Prostate gland (tissue), 2 donors: ENCODE measurements at regions of chr18 and their contacts with region 1.

Region 1: GRCh38 chr18:59697236-59697932 is at the start of gene CCBE1:
- DNase-seq: peak; percentile 43
- H3K4me3 ChIP-seq: peak within 1 kb of the TSS; percentile 34 to 36
- H3K27ac ChIP-seq: peak within 1 kb of the TSS; percentile 29 to 58
- H3K4me1 ChIP-seq: peaks cover 6% of the 10 kb centered on the region
- H3K27me3 ChIP-seq: no peaks in the 10 kb centered on the region
- CTCF ChIP-seq: peak; percentile 55 to 74 (median 64)
- POLR2A ChIP-seq: no peak
- total RNA-seq, gene CCBE1: 1.8 to 2.0 TPM

Region 2: GRCh38 chr18:59459369-59460079 is 237.9 kb before region 1 on chr18:
- intact Hi-C with region 1: loop called (anchors 5 kb)
- DNase-seq: no peak
- H3K4me3 ChIP-seq: no peak overlapping the region
- H3K27ac ChIP-seq: no peak overlapping the region
- H3K4me1 ChIP-seq: no peaks in the 10 kb centered on the region
- H3K27me3 ChIP-seq: no peaks in the 10 kb centered on the region
- CTCF ChIP-seq: peak; percentile 23 to 73 (median 70)
- POLR2A ChIP-seq: no peak

Region 3: DNA sequence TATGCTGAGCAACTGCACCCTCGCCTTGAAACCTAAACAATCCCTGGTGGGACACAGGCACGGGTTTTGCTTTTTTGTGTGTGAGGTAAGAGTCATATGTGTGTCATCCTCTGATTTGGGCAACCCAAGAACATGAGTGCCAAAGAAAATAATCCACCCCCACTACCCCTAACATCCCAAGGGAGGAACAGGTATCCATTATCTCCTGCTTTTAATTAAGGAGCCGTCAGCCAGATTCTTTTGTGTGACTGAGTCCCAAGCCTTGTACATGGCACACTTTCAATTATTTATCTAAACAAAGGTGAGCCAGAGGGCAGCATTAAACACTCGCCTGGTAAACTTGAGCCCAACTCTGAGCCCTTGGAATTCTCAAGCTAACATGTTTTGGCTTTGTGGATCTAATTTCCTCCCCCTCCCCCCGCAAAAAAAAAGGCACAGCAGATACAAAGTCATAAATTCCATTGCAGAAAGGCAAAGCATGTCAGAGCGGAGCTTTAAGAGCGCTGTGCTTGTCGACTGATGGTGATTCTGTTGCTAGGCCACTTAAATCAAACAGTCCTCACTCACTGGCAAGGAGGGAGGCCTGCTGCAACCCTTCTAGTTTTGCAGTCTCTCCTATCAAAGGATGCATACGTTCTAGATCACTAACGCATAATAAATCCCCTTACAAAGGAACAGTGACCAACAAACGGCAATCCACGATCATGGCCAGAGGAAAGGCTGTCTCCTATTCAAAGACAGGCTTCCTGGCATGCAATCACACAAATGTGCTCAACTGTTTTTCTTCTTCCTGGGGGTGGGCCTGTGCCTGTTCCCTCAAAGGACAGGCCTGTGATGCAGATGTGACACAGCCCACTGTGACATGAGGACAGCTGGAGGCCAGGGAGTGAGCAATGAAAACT is 194.9 kb before region 1 on chr18:
- intact Hi-C with region 1: loop called (anchors 5 kb)
- DNase-seq: peak; percentile 54
- H3K4me3 ChIP-seq: no peak overlapping the region
- H3K27ac ChIP-seq: peak overlapping the region in 1 of 2 donors; percentile 44
- H3K4me1 ChIP-seq: no peaks in the 10 kb centered on the region
- H3K27me3 ChIP-seq: no peaks in the 10 kb centered on the region
- CTCF ChIP-seq: no peak
- POLR2A ChIP-seq: no peak

Region 4: GRCh38 chr18:59536166-59536565 is 161.2 kb before region 1 on chr18:
- intact Hi-C with region 1: no loop called
- DNase-seq: no peak
- H3K4me3 ChIP-seq: no peak overlapping the region
- H3K27ac ChIP-seq: no peak overlapping the region
- H3K4me1 ChIP-seq: no peaks in the 10 kb centered on the region
- H3K27me3 ChIP-seq: no peaks in the 10 kb centered on the region
- CTCF ChIP-seq: no peak
- POLR2A ChIP-seq: no peak

Region 5: DNA sequence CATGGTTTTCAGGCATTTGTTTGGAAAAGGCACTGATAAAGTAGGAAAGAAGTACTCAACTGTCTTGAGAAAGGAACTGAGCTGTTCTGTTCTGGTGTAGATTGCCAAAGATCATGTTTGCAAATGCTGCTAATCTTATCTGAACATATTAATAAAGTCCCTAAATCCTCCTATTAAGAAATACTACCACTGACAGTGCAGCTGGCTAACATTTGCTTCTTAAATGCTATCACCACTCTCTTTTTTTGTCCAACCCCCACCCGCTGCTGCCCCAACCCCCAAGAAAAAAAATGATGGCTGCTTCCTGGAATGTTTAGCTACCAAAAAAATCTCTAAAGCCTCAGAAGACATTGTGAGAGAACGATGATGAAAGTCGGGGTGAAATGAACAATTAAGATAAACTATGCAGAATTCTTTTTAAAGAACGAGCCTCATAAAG is 130.8 kb before region 1 on chr18:
- intact Hi-C with region 1: loop called (anchors 5 kb)
- DNase-seq: no peak
- H3K4me3 ChIP-seq: no peak overlapping the region
- H3K27ac ChIP-seq: no peak overlapping the region
- H3K4me1 ChIP-seq: no peaks in the 10 kb centered on the region
- H3K27me3 ChIP-seq: no peaks in the 10 kb centered on the region
- CTCF ChIP-seq: no peak
- POLR2A ChIP-seq: no peak

Region 6: DNA sequence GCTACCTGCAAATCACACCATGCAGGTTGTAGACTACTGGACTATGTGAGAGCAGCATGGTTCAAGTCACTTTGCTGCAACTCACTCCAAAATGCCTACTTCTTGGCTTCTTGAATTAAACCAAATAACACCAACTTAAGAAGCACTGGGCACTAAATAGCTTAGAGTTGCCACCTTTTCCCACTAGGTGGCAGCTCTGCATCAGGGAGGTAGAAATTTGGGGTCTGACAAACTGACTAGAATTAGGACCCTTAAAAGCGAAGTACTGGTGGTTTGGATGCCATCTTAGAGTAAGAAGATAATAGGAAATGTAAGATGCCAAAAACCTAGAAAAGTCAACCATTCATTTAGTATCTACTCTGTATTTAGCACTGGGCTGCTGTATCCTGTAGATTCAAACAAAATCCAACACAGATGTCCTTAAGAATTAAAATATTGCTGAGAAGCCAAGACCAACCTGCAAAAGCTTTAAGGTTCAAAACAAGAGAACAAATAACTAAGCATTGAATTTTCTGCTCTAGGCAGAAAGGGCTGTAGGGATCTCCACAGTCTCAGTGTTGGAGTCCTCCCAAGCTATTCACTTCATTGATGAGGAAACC is 65.7 kb before region 1 on chr18:
- intact Hi-C with region 1: loop called (anchors 5 kb)
- DNase-seq: no peak
- H3K4me3 ChIP-seq: no peak overlapping the region
- H3K27ac ChIP-seq: no peak overlapping the region
- H3K4me1 ChIP-seq: no peaks in the 10 kb centered on the region
- H3K27me3 ChIP-seq: no peaks in the 10 kb centered on the region
- CTCF ChIP-seq: peak in 3 of 4 experiments; percentile 25 to 32 (median 28)
- POLR2A ChIP-seq: no peak

Region 7: GRCh38 chr18:59659508-59660170 is 37.7 kb before region 1 on chr18:
- intact Hi-C with region 1: loop called (anchors 5 kb)
- DNase-seq: no peak
- H3K4me3 ChIP-seq: no peak overlapping the region
- H3K27ac ChIP-seq: no peak overlapping the region
- H3K4me1 ChIP-seq: no peaks in the 10 kb centered on the region
- H3K27me3 ChIP-seq: no peaks in the 10 kb centered on the region
- CTCF ChIP-seq: no peak
- POLR2A ChIP-seq: no peak

Region 8: DNA sequence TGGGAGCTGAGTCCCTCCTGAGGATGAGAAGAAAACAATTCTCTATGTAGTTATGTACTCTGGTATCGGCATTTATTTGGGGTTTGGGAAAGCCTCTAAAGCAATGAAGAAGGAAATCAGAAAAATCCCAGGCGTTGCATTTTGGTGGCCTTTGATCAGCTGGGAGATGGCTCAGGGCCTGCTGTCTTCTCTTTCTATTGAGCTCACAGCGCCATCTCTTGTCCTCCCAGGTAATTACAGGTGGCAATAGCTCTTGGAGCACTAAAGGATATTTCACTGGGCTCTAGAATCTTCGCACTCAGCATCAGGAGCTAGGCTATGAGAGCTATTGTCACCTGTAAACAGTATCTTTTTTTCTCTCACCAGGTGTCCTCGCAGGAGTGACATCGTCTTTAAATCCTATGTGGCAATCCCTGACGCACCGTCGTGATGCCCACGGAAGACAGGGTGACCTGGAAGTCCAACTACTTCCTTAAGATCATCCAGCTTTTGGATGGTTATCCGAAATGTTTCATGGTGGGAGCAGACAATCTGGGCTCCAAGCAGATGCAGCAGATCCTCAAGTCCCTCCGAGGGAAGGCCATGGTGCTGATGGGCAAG is 126.3 kb after region 1 on chr18:
- intact Hi-C with region 1: loop called (anchors 1 kb)
- DNase-seq: peak; percentile 65
- H3K4me3 ChIP-seq: no peak overlapping the region
- H3K27ac ChIP-seq: no peak overlapping the region
- H3K4me1 ChIP-seq: no peaks in the 10 kb centered on the region
- H3K27me3 ChIP-seq: no peaks in the 10 kb centered on the region
- CTCF ChIP-seq: peak; percentile 38 to 84 (median 68)
- POLR2A ChIP-seq: no peak